ENCODE measurements at regions of chr1 and their contacts with region 1.

Region 1: GRCh38 chr1:167803358-167804207 is 81.8 kb downstream of the MPZL1 start:
- DNase-seq: peak; percentile 82
- ATAC-seq: peak; percentile 100
- H3K4me3 ChIP-seq: no peak overlapping the region
- H3K27ac ChIP-seq: no peak overlapping the region
- H3K4me1 ChIP-seq: peaks cover 12% of the 10 kb centered on the region
- H3K27me3 ChIP-seq: no peaks in the 10 kb centered on the region
- CTCF ChIP-seq: peak; percentile 95 to 100 (median 95); a peak in 5 of 6 replicates
- EP300 ChIP-seq: no peak
- POLR2A ChIP-seq: no peak
- RAD21 ChIP-seq: peak; percentile 84

Region 2: GRCh38 chr1:167721617-167722151 is 81.9 kb before region 1 on chr1 and contains the start of gene MPZL1:
- CTCF ChIA-PET with region 1: no interaction called
- POLR2A ChIA-PET with region 1: interaction called, 7 read pairs
- RAD21 ChIA-PET with region 1: interaction called, 4 read pairs
- SMC1A ChIA-PET with region 1: interaction called, 4 read pairs
- in situ Hi-C with region 1: no loop called
- intact Hi-C with region 1: loop called (anchors 1 kb)
- DNase-seq: peak; percentile 77
- ATAC-seq: peak; percentile 92
- H3K4me3 ChIP-seq: peak within 1 kb of the TSS; percentile 89
- H3K27ac ChIP-seq: peak within 1 kb of the TSS; percentile 80
- H3K4me1 ChIP-seq: peaks cover 36% of the 10 kb centered on the region
- H3K27me3 ChIP-seq: no peaks in the 10 kb centered on the region
- CTCF ChIP-seq: no peak
- EP300 ChIP-seq: no peak
- POLR2A ChIP-seq: peak; percentile 82
- RAD21 ChIP-seq: no peak
- polyA plus RNA-seq, gene MPZL1: 9.8 to 12.0 TPM

Region 3: GRCh38 chr1:167984886-167985489 is 181.4 kb after region 1 on chr1:
- CTCF ChIA-PET with region 1: no interaction called
- POLR2A ChIA-PET with region 1: no interaction called
- RAD21 ChIA-PET with region 1: no interaction called
- SMC1A ChIA-PET with region 1: no interaction called
- in situ Hi-C with region 1: no loop called
- intact Hi-C with region 1: no loop called
- DNase-seq: no peak
- ATAC-seq: no peak
- H3K4me3 ChIP-seq: no peak overlapping the region
- H3K27ac ChIP-seq: no peak overlapping the region
- H3K4me1 ChIP-seq: no peaks in the 10 kb centered on the region
- H3K27me3 ChIP-seq: no peaks in the 10 kb centered on the region
- CTCF ChIP-seq: no peak
- EP300 ChIP-seq: no peak
- POLR2A ChIP-seq: no peak
- RAD21 ChIP-seq: no peak